K562 (cell line): ENCODE measurements at regions of chr2 and their contacts with region 1.

Region 1: GRCh38 chr2:58710795-58711279 is 469.7 kb upstream of the FANCL start:
- DNase-seq: peak in 2 of 4 experiments; percentile 48 to 70
- ATAC-seq: peak; percentile 64
- H3K4me3 ChIP-seq: no peak overlapping the region
- H3K27ac ChIP-seq: peak overlapping the region; percentile 69
- H3K4me1 ChIP-seq: peaks cover 3 to 36% of the 10 kb centered on the region in 2 experiments; a peak in 4 of 5 replicates
- H3K27me3 ChIP-seq: no peaks in the 10 kb centered on the region
- CTCF ChIP-seq: peak in 1 of 3 experiments; percentile 13; a peak in 1 of 6 replicates
- EP300 ChIP-seq: 0 out of 2 replicates have a peak, but pooled peaks have one; percentile 6
- POLR2A ChIP-seq: no peak
- RAD21 ChIP-seq: peak in 1 of 2 experiments; percentile 31; a peak in 2 of 4 replicates

Region 2: DNA sequence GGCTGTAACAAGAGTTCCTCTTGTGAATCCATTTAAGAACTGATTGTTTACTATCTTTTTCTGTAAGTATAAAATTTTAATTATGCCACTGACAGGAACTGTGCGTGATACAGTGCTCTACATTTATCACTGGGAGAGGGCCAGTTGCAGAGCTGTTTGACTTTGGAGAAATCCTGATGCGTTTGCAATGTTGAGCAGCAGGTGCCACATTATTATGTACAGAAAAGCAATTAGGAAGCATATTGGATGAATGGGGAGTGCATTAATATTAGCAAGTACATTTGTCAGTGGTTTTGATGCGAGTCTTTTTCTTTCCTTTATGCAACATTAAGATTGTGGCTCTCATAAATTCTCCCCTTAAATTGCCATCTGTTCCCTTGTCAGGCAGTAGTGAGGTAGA is 167.4 kb before region 1 on chr2:
- CTCF ChIA-PET with region 1: no interaction called
- POLR2A ChIA-PET with region 1: no interaction called
- in situ Hi-C with region 1: no loop called
- intact Hi-C with region 1: no loop called
- DNase-seq: no peak
- ATAC-seq: no peak
- H3K4me3 ChIP-seq: no peak overlapping the region
- H3K27ac ChIP-seq: no peak overlapping the region
- H3K4me1 ChIP-seq: no peaks in the 10 kb centered on the region
- H3K27me3 ChIP-seq: no peaks in the 10 kb centered on the region
- CTCF ChIP-seq: no peak
- EP300 ChIP-seq: no peak
- POLR2A ChIP-seq: no peak
- RAD21 ChIP-seq: no peak

Region 3: GRCh38 chr2:58664523-58665151 is 46.2 kb before region 1 on chr2:
- CTCF ChIA-PET with region 1: no interaction called
- POLR2A ChIA-PET with region 1: no interaction called
- in situ Hi-C with region 1: no loop called
- intact Hi-C with region 1: loop called (anchors 2 kb)
- DNase-seq: peak in 2 of 4 experiments; percentile 10 to 31
- ATAC-seq: no peak
- H3K4me3 ChIP-seq: no peak overlapping the region
- H3K27ac ChIP-seq: no peak overlapping the region
- H3K4me1 ChIP-seq: peaks cover 6 to 30% of the 10 kb centered on the region in 2 experiments; a peak in 4 of 5 replicates
- H3K27me3 ChIP-seq: no peaks in the 10 kb centered on the region
- CTCF ChIP-seq: no peak
- EP300 ChIP-seq: no peak
- POLR2A ChIP-seq: no peak
- RAD21 ChIP-seq: no peak

Region 4: DNA sequence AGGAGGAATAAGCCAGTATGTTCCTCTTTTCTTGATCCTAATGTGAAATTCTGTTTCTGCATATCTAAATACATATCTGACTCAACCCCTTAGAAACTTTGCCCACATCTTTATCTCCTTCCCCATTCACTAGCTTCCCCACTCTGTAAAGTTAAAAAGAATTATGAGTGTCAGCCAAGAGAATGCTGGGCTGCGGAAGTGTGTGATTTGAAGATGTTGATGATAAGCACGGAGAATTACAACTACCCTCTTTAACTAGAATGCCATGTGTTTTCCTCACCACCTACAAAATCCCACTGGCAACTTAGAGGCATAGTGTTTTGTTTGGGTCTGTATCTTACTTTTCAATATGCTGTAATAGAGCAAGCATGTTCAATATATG is 20.6 kb after region 1 on chr2:
- CTCF ChIA-PET with region 1: no interaction called
- POLR2A ChIA-PET with region 1: interaction called, 4 read pairs
- in situ Hi-C with region 1: no loop called
- intact Hi-C with region 1: loop called (anchors 1 kb)
- DNase-seq: peak; percentile 15 to 83 (median 43)
- ATAC-seq: peak; percentile 81
- H3K4me3 ChIP-seq: no peak overlapping the region
- H3K27ac ChIP-seq: peak overlapping the region; percentile 81
- H3K4me1 ChIP-seq: peaks cover 0 to 61% of the 10 kb centered on the region in 2 experiments; a peak in 4 of 5 replicates
- H3K27me3 ChIP-seq: no peaks in the 10 kb centered on the region
- CTCF ChIP-seq: no peak
- EP300 ChIP-seq: peak; percentile 98
- POLR2A ChIP-seq: no peak
- RAD21 ChIP-seq: peak in 1 of 2 experiments; percentile 14; a peak in 2 of 4 replicates

Region 5: GRCh38 chr2:58976375-58977071 is 265.7 kb after region 1 on chr2:
- CTCF ChIA-PET with region 1: no interaction called
- POLR2A ChIA-PET with region 1: no interaction called
- in situ Hi-C with region 1: no loop called
- intact Hi-C with region 1: no loop called
- DNase-seq: no peak
- ATAC-seq: no peak
- H3K4me3 ChIP-seq: no peak overlapping the region
- H3K27ac ChIP-seq: no peak overlapping the region
- H3K4me1 ChIP-seq: no peaks in the 10 kb centered on the region
- H3K27me3 ChIP-seq: no peaks in the 10 kb centered on the region
- CTCF ChIP-seq: no peak
- EP300 ChIP-seq: no peak
- POLR2A ChIP-seq: no peak
- RAD21 ChIP-seq: no peak